KBM-7 (cell line): ENCODE measurements at regions of chr18 and their contacts with region 1.

Region 1: DNA sequence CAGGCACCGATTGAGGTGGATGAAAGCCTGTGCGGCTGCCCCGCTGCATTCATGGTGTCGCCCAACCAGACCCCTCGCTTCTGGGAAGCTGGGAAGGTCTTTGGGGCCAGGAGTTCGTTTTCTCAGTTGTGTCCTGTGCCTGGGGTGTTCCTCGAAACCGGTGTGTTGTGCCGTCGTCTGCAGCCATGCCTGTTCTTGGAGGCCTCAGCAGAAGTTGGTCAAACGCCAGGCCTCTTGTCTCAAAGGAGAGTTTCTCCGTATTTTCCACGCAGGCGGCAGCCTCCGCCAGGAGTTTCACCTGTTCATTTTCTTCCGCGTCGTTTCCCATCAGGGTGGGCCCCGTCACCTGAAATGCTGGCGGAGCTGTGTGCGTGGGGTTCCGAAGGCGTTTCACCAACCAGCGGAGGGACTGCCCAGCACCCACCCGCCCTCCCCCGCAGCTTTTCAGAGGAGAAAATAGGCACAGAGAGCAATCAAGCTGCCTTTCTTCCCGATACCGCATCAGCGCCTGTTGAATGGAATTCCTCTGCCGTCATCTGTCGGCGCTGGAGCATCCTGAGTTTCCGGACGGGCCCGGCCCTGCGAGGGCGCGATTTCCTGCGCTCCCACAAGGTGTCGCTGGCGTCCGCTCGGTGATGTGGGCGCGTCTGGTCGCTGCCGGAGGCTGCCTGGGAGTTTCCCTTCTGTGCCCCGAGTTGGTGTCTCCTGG is 17.0 kb upstream of the NFATC1 start:
- DNase-seq: peak; percentile 78

Region 2: GRCh38 chr18:79169958-79170555 is 208.6 kb before region 1 on chr18:
- in situ Hi-C with region 1: no loop called
- DNase-seq: no peak

Region 3: GRCh38 chr18:79528846-79529245 is 150.2 kb after region 1 on chr18:
- in situ Hi-C with region 1: loop called (anchors 10 kb)
- DNase-seq: peak; percentile 74

Region 4: GRCh38 chr18:79644006-79644665 is 265.4 kb after region 1 on chr18:
- in situ Hi-C with region 1: loop called (anchors 25 kb)
- DNase-seq: peak; percentile 74